PC-9 (cell line): ENCODE measurements at regions of chr3 and their contacts with region 1.

Region 1: GRCh38 chr3:136994772-136995516 is 37.2 kb downstream of the IL20RB start:
- DNase-seq: peak; percentile 79 to 86
- H3K4me3 ChIP-seq: no peak overlapping the region
- H3K27ac ChIP-seq: peak overlapping the region; percentile 40; the same call in 1 of the 2 replicates
- H3K4me1 ChIP-seq: peaks cover 16% of the 10 kb centered on the region
- H3K27me3 ChIP-seq: no peaks in the 10 kb centered on the region
- CTCF ChIP-seq: no peak

Region 2: DNA sequence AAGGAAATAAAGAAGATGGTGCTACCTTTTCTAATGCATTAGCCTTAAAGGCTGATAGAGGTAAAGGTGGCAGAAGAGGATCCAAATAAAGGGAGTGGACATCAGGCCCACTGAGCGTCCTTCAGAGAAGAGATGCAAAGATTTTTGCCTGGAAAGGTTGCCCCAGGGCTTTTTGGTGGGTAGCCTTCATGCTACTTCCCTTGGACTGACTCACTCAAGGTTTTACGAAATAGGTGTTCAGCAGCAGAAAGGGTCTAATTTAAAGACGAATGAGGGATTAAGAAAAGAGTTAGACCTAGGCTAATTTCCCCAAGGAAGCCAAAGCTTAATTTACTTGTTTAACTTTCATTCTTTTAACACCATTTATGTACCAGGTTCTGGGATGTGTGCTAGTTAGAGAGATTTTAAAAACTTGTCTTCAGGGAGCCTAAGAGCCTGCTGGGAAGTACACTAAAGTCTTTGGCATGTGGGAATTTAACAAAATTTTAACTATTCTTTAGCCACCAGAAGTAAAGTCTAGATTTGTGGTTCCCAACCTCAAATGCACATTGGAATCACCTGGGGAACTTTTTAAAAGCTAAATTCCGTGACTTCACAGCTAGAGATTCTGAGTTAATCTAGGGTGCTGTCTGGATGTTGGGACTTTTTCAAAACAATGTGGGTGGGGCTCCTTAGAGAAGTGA is 34.0 kb before region 1 on chr3:
- CTCF ChIA-PET with region 1: no interaction called
- POLR2A ChIA-PET with region 1: no interaction called
- intact Hi-C with region 1: loop called (anchors 5 kb)
- DNase-seq: peak; percentile 76 to 84
- H3K4me3 ChIP-seq: peak overlapping the region; percentile 34; the same call in 1 of the 2 replicates
- H3K27ac ChIP-seq: peak overlapping the region; percentile 75
- H3K4me1 ChIP-seq: peaks cover 53% of the 10 kb centered on the region
- H3K27me3 ChIP-seq: no peaks in the 10 kb centered on the region
- CTCF ChIP-seq: no peak

Region 3: GRCh38 chr3:137778941-137779340 is 784.0 kb after region 1 on chr3:
- CTCF ChIA-PET with region 1: no interaction called
- POLR2A ChIA-PET with region 1: no interaction called
- intact Hi-C with region 1: no loop called
- DNase-seq: no peak
- H3K4me3 ChIP-seq: no peak overlapping the region
- H3K27ac ChIP-seq: no peak overlapping the region
- H3K4me1 ChIP-seq: no peaks in the 10 kb centered on the region
- H3K27me3 ChIP-seq: peaks cover 13% of the 10 kb centered on the region
- CTCF ChIP-seq: no peak